Common myeloid progenitor, CD34-positive (primary cell): ENCODE measurements at regions of chr5 and their contacts with region 1.

Region 1: DNA sequence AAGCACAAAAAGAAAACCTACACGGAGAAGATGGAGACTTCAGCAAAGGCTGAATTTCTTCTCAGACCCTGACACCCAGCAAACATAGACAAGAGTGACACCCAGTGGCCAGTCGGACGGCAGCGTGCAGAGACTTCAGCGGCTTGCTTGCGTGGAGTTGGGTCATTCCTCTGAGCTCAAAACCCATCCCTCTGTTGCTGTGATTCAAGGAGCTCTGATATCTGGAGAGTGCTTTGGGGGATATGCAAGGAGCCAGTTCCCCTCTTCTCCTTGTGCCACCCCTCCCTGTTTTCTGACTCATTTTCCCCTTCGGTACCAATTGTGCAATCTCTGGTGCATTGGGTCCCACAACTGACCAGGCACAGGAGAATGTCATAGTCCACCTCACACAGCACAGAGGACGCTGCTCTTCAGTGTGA is 27.5 kb downstream of the SH3TC2 start:
- DNase-seq: peak; percentile 73 to 87 (median 83)
- H3K4me3 ChIP-seq: no peak overlapping the region
- H3K27ac ChIP-seq: no peak overlapping the region
- H3K4me1 ChIP-seq: peaks cover 21 to 51% (median 50%) of the 10 kb centered on the region in 4 experiments
- H3K27me3 ChIP-seq: no peaks in the 10 kb centered on the region

Region 2: GRCh38 chr5:148730943-148731861 is 304.2 kb before region 1 on chr5:
- CTCF ChIA-PET with region 1: interaction called, 210 read pairs
- POLR2A ChIA-PET with region 1: no interaction called
- DNase-seq: peak; percentile 89 to 95 (median 92)
- H3K4me3 ChIP-seq: peak overlapping the region in 1 of 7 experiments; percentile 6
- H3K27ac ChIP-seq: no peak overlapping the region
- H3K4me1 ChIP-seq: peaks cover 0 to 8% (median 1%) of the 10 kb centered on the region in 4 experiments
- H3K27me3 ChIP-seq: no peaks in the 10 kb centered on the region

Region 3: DNA sequence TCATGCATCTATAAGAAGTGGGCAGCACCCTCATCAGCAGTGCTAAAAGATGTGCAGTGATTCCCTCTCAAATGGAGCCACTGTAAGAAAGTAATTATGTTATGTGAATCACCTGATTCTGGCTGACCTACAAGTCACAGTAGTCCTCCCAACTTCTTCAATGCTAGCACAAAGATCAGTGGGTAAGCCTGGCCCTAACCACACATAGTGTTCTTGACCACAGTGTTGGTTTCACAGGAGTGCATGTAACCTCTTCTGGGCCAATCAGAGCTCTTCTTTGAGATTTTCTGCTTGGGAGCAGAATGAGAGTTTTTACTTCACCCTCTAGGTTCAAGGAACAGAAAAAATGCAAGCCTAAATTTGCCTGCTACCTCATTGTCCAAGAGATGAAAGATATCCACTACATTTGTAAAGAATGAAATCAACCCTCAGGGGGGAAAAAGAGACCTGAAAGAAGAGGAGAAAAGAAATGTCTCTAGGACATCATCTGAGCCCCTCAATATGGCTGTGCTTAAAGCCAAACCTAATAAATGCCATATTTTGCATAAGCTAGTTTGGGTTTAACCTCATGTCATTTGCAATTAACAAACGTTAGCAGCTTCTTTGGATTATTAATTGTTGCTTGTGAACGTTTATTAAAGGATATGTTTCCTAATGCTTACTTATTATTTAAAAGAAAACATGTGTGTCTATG is 274.3 kb before region 1 on chr5:
- CTCF ChIA-PET with region 1: no interaction called
- POLR2A ChIA-PET with region 1: no interaction called
- DNase-seq: no peak
- H3K4me3 ChIP-seq: no peak overlapping the region
- H3K27ac ChIP-seq: no peak overlapping the region
- H3K4me1 ChIP-seq: peaks cover 0 to 19% (median 3%) of the 10 kb centered on the region in 4 experiments
- H3K27me3 ChIP-seq: no peaks in the 10 kb centered on the region

Region 4: DNA sequence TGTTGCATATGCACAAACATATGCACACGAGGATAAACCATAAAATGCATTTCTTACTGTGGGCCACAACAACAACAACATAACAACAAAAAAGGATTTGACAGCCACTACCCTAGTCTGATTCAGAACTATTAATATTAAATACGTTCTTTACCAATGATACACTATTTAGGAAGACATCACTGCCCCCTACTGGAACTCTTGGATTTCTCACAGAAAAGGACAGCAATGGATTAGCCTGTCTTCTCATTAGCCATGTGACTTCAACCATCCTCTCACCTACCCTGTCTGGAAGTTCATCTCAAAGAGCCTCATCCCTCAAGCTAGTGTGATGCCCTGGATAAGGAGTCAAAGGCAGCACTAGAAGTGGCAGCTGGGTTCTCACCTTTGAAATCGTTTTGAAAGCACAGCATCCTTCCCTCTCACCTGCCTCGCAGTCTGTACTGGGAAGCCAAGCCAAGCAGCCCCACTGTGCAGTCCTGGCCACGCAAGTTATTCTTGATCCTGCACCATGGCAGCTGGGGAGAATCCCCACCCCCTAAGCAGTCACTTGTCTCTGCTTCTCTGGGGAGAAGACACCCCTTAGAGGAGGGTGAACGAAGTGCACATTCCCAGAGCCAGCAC is 37.1 kb before region 1 on chr5:
- CTCF ChIA-PET with region 1: interaction called, 37 read pairs
- POLR2A ChIA-PET with region 1: no interaction called
- DNase-seq: peak; percentile 59 to 74 (median 70)
- H3K4me3 ChIP-seq: no peak overlapping the region
- H3K27ac ChIP-seq: no peak overlapping the region
- H3K4me1 ChIP-seq: no peaks in the 10 kb centered on the region
- H3K27me3 ChIP-seq: no peaks in the 10 kb centered on the region

Region 5: GRCh38 chr5:149011074-149011476 is 24.3 kb before region 1 on chr5:
- CTCF ChIA-PET with region 1: interaction called, 13 read pairs
- POLR2A ChIA-PET with region 1: no interaction called
- DNase-seq: no peak
- H3K4me3 ChIP-seq: no peak overlapping the region
- H3K27ac ChIP-seq: no peak overlapping the region
- H3K4me1 ChIP-seq: peaks cover 0 to 3% (median 0%) of the 10 kb centered on the region in 4 experiments
- H3K27me3 ChIP-seq: no peaks in the 10 kb centered on the region

Region 6: DNA sequence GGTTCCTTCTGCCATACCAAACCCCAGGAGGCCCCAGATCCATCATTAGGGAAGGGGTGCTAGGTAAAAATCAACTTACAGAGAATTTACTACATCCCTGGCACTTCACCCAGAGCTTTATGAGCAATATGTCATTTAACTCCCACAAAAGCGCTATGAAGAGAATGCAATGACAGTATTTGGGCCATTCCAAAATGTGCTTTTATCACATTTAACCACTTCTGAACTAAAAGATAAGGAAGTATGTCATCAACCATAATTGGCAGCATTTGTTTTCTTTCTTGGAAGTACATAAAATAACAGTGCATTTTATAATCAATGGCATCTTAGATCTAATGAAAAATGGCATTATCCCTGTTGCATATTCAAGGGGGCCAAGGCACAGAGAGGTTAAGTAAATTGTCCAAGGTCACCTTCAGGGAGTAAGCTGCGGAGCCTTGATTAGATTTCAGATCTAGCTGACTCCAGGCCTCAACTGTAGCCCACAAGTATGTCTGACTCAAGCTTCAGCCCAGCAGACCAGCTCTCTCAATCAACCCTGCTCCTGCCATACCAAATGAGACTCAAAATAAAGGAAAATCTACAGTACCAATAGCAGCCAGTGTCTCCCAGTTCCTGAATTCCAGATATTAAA is 10.9 kb after region 1 on chr5:
- CTCF ChIA-PET with region 1: interaction called, 12 read pairs
- POLR2A ChIA-PET with region 1: no interaction called
- DNase-seq: peak in 2 of 3 donors; percentile 13 to 38
- H3K4me3 ChIP-seq: no peak overlapping the region
- H3K27ac ChIP-seq: no peak overlapping the region
- H3K4me1 ChIP-seq: peaks cover 0 to 7% (median 0%) of the 10 kb centered on the region in 4 experiments
- H3K27me3 ChIP-seq: no peaks in the 10 kb centered on the region

Region 7: DNA sequence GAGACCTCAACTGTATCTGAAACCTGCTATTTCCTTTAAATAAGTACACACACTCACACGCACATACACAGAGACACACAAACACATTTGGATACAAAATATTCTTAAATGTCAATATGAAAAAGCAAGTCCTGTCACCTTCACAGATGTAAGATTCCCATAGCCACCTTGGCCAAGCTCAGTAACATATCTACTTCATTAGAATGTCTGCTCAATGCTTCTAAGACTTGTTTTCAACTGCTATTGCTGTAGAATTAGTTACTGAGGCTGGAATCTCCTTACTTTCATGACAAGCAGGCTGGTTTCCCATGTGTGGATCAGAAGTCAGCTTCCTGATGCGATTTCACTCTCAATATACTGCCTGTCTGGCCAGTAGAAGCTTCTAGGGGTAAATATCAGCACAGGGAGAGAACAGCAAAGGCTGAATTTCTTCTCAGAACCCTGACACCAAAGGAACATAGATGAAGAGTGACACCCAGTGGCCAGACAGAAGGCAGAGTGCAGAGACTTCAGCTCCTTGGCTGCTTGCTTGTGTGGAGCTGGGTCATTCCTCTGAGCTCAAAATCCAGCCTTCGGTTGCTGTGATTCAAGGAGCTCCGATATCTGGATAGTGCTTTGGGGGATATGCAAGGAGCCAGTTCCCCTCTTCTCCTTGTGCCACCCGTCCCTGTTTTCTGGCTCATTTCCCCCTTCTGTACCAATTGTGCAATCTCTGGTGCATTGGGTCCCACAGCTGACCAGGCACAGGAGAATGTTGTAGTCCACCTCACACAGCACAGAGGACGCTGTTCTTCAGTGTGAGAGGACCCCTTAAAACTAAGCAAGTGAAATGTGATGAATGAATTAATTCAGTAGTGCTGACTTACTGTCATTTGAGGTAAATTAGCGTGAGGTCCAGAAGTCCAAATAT is 79.3 kb after region 1 on chr5:
- CTCF ChIA-PET with region 1: interaction called, 89 read pairs
- POLR2A ChIA-PET with region 1: no interaction called
- DNase-seq: peak; percentile 77 to 88 (median 85)
- H3K4me3 ChIP-seq: no peak overlapping the region
- H3K27ac ChIP-seq: no peak overlapping the region
- H3K4me1 ChIP-seq: peaks cover 0 to 8% (median 3%) of the 10 kb centered on the region in 4 experiments
- H3K27me3 ChIP-seq: no peaks in the 10 kb centered on the region

Region 8: GRCh38 chr5:149172261-149172660 is 136.9 kb after region 1 on chr5:
- CTCF ChIA-PET with region 1: no interaction called
- POLR2A ChIA-PET with region 1: no interaction called
- DNase-seq: peak in 1 of 3 donors; percentile 13
- H3K4me3 ChIP-seq: no peak overlapping the region
- H3K27ac ChIP-seq: no peak overlapping the region
- H3K4me1 ChIP-seq: no peaks in the 10 kb centered on the region
- H3K27me3 ChIP-seq: peaks cover 0 to 4% (median 0%) of the 10 kb centered on the region in 5 experiments